B cell (primary cell): ENCODE measurements at regions of chr1 and their contacts with region 1.

Region 1: GRCh38 chr1:171984850-171985485 is 143.7 kb downstream of the DNM3 start:
- DNase-seq: peak; percentile 49
- ATAC-seq: peak; percentile 41
- H3K4me3 ChIP-seq: no peak overlapping the region
- H3K4me3 Mint-ChIP-seq: no peak overlapping the region
- H3K27ac ChIP-seq: no peak overlapping the region
- H3K27ac Mint-ChIP-seq: no peak overlapping the region
- H3K4me1 ChIP-seq: no peaks in the 10 kb centered on the region
- H3K4me1 Mint-ChIP-seq: no peaks in the 10 kb centered on the region
- H3K27me3 ChIP-seq: no peaks in the 10 kb centered on the region
- H3K27me3 Mint-ChIP-seq: peaks cover 4% of the 10 kb centered on the region
- CTCF ChIP-seq: peak; percentile 75

Region 2: GRCh38 chr1:171644805-171645483 is 340.0 kb before region 1 on chr1:
- CTCF ChIA-PET with region 1: interaction called, 18 read pairs
- POLR2A ChIA-PET with region 1: no interaction called
- intact Hi-C with region 1: loop called (anchors 1 kb)
- DNase-seq: peak; percentile 41
- ATAC-seq: peak; percentile 45
- H3K4me3 ChIP-seq: no peak overlapping the region
- H3K4me3 Mint-ChIP-seq: no peak overlapping the region
- H3K27ac ChIP-seq: no peak overlapping the region
- H3K27ac Mint-ChIP-seq: no peak overlapping the region
- H3K4me1 ChIP-seq: no peaks in the 10 kb centered on the region
- H3K4me1 Mint-ChIP-seq: peaks cover 3% of the 10 kb centered on the region
- H3K27me3 ChIP-seq: no peaks in the 10 kb centered on the region
- H3K27me3 Mint-ChIP-seq: peaks cover 5% of the 10 kb centered on the region
- CTCF ChIP-seq: peak; percentile 55

Region 3: GRCh38 chr1:171654942-171655745 is 329.8 kb before region 1 on chr1:
- CTCF ChIA-PET with region 1: interaction called, 3 read pairs
- POLR2A ChIA-PET with region 1: no interaction called
- intact Hi-C with region 1: loop called (anchors 2 kb)
- DNase-seq: peak; percentile 42
- ATAC-seq: no peak
- H3K4me3 ChIP-seq: peak overlapping the region in 1 of 5 experiments; percentile 5
- H3K4me3 Mint-ChIP-seq: peak overlapping the region; percentile 27
- H3K27ac ChIP-seq: no peak overlapping the region
- H3K27ac Mint-ChIP-seq: no peak overlapping the region
- H3K4me1 ChIP-seq: peaks cover 8 to 13% of the 10 kb centered on the region in 2 donors
- H3K4me1 Mint-ChIP-seq: peaks cover 10% of the 10 kb centered on the region
- H3K27me3 ChIP-seq: peaks cover 0 to 20% (median 2%) of the 10 kb centered on the region in 4 experiments
- H3K27me3 Mint-ChIP-seq: peaks cover 46% of the 10 kb centered on the region
- CTCF ChIP-seq: peak; percentile 63

Region 4: DNA sequence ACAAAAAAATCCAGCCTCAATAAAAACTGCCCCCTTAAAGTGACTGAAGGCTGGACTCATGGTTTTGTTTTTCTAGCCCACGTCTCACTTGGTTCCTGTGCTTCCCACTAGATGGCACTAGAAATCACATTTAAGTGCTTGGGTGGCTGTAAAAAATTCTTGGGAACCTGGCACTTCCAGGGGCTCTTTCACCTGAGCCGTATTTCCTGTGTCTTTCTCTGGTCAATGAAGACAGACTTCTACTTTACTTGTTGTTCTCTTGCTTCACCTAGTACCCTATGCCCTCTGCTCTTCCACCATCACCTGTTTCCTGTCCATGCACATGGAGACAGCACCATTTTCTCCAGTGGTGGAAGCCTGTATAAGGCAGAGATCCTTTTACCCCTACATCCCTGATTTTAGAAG is 183.5 kb before region 1 on chr1:
- CTCF ChIA-PET with region 1: interaction called, 234 read pairs
- POLR2A ChIA-PET with region 1: no interaction called
- intact Hi-C with region 1: no loop called
- DNase-seq: peak; percentile 38
- ATAC-seq: peak; percentile 51
- H3K4me3 ChIP-seq: no peak overlapping the region
- H3K4me3 Mint-ChIP-seq: no peak overlapping the region
- H3K27ac ChIP-seq: no peak overlapping the region
- H3K27ac Mint-ChIP-seq: no peak overlapping the region
- H3K4me1 ChIP-seq: peaks cover 7 to 11% of the 10 kb centered on the region in 2 donors
- H3K4me1 Mint-ChIP-seq: peaks cover 15% of the 10 kb centered on the region
- H3K27me3 ChIP-seq: no peaks in the 10 kb centered on the region
- H3K27me3 Mint-ChIP-seq: no peaks in the 10 kb centered on the region
- CTCF ChIP-seq: peak; percentile 82

Region 5: GRCh38 chr1:173768206-173768605 is 1783.2 kb after region 1 on chr1:
- CTCF ChIA-PET with region 1: no interaction called
- POLR2A ChIA-PET with region 1: no interaction called
- intact Hi-C with region 1: loop called (anchors 5 kb)
- DNase-seq: no peak
- ATAC-seq: no peak
- H3K4me3 ChIP-seq: no peak overlapping the region
- H3K4me3 Mint-ChIP-seq: no peak overlapping the region
- H3K27ac ChIP-seq: no peak overlapping the region
- H3K27ac Mint-ChIP-seq: no peak overlapping the region
- H3K4me1 ChIP-seq: no peaks in the 10 kb centered on the region
- H3K4me1 Mint-ChIP-seq: no peaks in the 10 kb centered on the region
- H3K27me3 ChIP-seq: no peaks in the 10 kb centered on the region
- H3K27me3 Mint-ChIP-seq: no peaks in the 10 kb centered on the region
- CTCF ChIP-seq: no peak